PC-9 (cell line): ENCODE measurements at regions of chr22 and their contacts with region 1.

Region 1: DNA sequence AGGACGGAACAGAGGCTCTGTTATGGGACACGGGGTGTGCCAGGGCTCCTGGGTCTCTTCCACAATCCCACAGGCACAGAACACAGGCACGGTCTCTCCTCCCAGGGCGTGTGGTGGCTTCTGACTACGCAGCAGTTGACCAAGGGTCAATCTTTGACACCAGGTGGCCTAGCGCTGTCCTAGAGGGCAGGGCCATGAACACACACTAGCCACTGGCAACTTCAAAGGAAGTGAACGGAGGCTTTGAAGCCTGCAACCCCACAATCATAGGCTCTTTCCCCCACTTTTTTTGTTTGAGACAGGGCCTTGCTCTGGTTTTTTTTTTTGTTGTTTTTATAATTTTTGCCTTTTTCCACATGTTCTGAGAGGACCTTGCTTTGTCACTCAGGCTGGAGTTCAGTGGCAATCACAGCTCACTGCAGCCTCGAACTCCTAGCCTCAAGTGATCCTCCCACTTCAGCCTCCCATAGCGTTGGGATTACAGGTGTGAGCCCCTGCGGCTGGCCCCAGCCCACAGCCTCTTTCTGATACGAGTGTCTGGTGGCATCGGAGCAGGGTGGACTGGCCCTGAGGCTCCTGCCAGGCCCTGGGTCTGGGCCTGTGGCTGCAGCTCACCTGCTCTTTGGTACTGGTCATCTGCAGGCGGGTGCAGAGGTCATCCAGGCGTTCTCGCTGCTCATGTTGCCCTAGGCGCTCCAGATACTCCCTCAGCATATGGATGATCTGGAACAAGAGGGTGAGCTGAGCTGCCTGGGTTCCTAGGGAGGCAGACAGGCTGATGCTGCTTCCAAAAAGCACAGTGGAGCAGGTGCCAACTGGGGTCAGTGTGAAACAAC is 9.1 kb downstream of the GALR3 start:
- DNase-seq: no peak
- H3K4me3 ChIP-seq: no peak overlapping the region
- H3K27ac ChIP-seq: no peak overlapping the region
- H3K4me1 ChIP-seq: no peaks in the 10 kb centered on the region
- H3K27me3 ChIP-seq: no peaks in the 10 kb centered on the region
- CTCF ChIP-seq: no peak

Region 2: DNA sequence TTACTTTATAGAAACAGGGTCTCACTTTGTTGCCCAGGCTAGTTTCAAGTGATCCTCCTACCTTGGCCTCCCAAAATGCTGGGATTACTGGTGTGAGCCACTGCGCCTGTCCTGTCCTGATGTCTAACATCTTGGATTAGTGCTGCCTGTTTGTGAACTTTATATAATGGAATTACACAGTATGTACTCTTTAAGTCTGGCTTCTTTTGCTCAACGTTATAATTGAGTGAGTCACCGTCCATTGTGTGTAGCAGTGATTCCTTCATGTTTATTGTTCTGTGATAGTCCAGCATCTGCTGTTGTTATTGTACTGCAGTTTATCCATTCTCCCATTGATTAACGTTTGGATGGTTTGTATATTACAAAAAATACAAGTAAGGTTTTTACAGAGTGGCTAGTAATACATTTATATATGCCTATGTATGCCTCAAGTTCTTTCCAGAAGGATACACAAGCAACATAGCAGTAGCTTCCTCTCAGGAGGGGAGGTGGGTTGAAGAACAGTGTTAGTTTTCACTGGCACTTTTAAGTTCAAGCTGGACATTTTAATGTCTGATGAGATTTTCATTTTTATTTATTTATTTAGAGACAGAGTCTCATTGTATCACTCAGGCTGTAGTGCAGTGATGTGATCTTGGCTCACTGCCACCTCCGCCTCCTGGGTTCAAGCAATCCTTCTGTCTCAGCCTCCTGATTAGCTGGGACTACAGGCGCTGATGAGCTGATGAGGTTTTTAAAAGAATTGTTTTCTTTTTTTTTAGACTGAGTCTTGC is 48.6 kb after region 1 on chr22:
- CTCF ChIA-PET with region 1: interaction called, 19 read pairs
- POLR2A ChIA-PET with region 1: no interaction called
- intact Hi-C with region 1: no loop called
- DNase-seq: no peak
- H3K4me3 ChIP-seq: no peak overlapping the region
- H3K27ac ChIP-seq: no peak overlapping the region
- H3K4me1 ChIP-seq: no peaks in the 10 kb centered on the region
- H3K27me3 ChIP-seq: no peaks in the 10 kb centered on the region
- CTCF ChIP-seq: no peak

Region 3: GRCh38 chr22:37910890-37911743 is 78.9 kb after region 1 on chr22:
- CTCF ChIA-PET with region 1: interaction called, 11 read pairs
- POLR2A ChIA-PET with region 1: no interaction called
- intact Hi-C with region 1: no loop called
- DNase-seq: no peak
- H3K4me3 ChIP-seq: no peak overlapping the region
- H3K27ac ChIP-seq: no peak overlapping the region
- H3K4me1 ChIP-seq: peaks cover 15% of the 10 kb centered on the region
- H3K27me3 ChIP-seq: no peaks in the 10 kb centered on the region
- CTCF ChIP-seq: no peak

Region 4: DNA sequence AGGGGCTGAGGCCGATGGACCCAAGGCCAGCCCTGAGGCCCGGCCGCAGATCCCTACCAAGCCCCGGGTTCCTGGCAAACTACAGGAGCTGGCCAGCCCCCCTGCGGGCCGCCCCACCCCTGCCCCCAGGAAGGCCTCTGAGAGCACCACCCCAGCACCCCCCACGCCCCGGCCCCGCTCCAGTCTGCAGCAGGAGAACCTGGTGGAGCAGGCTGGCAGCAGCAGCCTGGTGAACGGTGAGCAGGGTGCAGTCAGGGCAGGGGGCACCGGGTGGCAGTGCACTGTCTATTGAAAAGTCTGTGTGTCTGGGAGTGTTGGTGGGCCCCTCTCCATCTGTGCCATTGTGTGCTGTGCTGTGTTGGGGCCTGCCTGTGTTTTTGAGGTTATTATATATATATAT is 90.0 kb after region 1 on chr22:
- CTCF ChIA-PET with region 1: no interaction called
- POLR2A ChIA-PET with region 1: no interaction called
- intact Hi-C with region 1: no loop called
- DNase-seq: no peak
- H3K4me3 ChIP-seq: no peak overlapping the region
- H3K27ac ChIP-seq: no peak overlapping the region
- H3K4me1 ChIP-seq: no peaks in the 10 kb centered on the region
- H3K27me3 ChIP-seq: no peaks in the 10 kb centered on the region
- CTCF ChIP-seq: no peak